CD4-positive, alpha-beta T cell (primary cell): ENCODE measurements at regions of chr13 and their contacts with region 1.

Region 1: DNA sequence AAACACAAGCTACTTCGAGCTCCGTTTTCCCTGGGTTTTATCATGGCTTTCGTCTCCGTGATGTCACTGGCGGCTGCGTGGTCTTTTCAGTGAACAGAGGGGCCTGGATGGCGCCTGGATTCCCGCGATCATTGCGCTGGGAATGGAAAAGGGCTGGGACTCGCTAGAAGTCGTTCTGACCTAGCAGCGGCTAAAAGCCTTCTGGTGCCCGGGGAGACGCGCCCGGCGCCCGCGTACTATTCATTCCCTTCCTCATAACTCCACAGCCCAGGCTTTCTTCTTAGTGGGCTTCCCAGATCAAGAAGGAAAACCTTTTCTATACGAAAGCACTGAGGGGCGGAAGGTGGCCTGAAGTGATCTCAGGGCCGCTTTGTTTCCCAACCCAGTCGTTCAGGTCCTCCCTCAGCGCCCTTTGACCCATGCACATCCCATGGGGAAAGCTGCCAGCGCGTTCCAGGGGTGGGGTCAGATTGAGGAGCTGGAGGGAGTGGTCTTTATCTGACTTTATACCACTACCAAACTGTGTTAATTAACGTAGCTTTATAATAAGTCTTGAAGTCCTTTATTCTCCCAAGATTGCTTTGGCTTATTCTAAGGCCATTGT is 96.6 kb downstream of the ELF1 start:
- DNase-seq: peak in 2 of 14 experiments; percentile 9 to 37
- ATAC-seq: no peak
- H3K4me3 ChIP-seq: no peak overlapping the region
- H3K4me3 Mint-ChIP-seq: peak overlapping the region; percentile 80
- H3K27ac ChIP-seq: no peak overlapping the region
- H3K27ac Mint-ChIP-seq: peak overlapping the region; percentile 42
- H3K4me1 ChIP-seq: peaks cover 15% of the 10 kb centered on the region
- H3K4me1 Mint-ChIP-seq: peaks cover 25% of the 10 kb centered on the region
- H3K27me3 ChIP-seq: no peaks in the 10 kb centered on the region
- H3K27me3 Mint-ChIP-seq: no peaks in the 10 kb centered on the region
- CTCF ChIP-seq: no peak

Region 2: GRCh38 chr13:40777166-40777808 is 145.3 kb before region 1 on chr13:
- CTCF ChIA-PET with region 1: interaction called, 4 read pairs
- POLR2A ChIA-PET with region 1: interaction called, 6 read pairs
- intact Hi-C with region 1: loop called (anchors 2 to 5 kb)
- DNase-seq: peak in 7 of 14 experiments; percentile 15 to 76 (median 45)
- ATAC-seq: peak; percentile 50
- H3K4me3 ChIP-seq: peak overlapping the region; percentile 24
- H3K4me3 Mint-ChIP-seq: peak overlapping the region; percentile 83
- H3K27ac ChIP-seq: peak overlapping the region; percentile 71 to 73
- H3K27ac Mint-ChIP-seq: peak overlapping the region; percentile 91
- H3K4me1 ChIP-seq: peaks cover 30% of the 10 kb centered on the region
- H3K4me1 Mint-ChIP-seq: peaks cover 33% of the 10 kb centered on the region
- H3K27me3 ChIP-seq: no peaks in the 10 kb centered on the region
- H3K27me3 Mint-ChIP-seq: no peaks in the 10 kb centered on the region
- CTCF ChIP-seq: peak; percentile 84

Region 3: GRCh38 chr13:40933508-40934204 is 11.1 kb after region 1 on chr13:
- CTCF ChIA-PET with region 1: no interaction called
- POLR2A ChIA-PET with region 1: interaction called, 13 read pairs
- intact Hi-C with region 1: no loop called
- DNase-seq: peak in 1 of 14 experiments; percentile 17
- ATAC-seq: no peak
- H3K4me3 ChIP-seq: no peak overlapping the region
- H3K4me3 Mint-ChIP-seq: peak overlapping the region; percentile 42
- H3K27ac ChIP-seq: no peak overlapping the region
- H3K27ac Mint-ChIP-seq: peak overlapping the region; percentile 57
- H3K4me1 ChIP-seq: peaks cover 6% of the 10 kb centered on the region
- H3K4me1 Mint-ChIP-seq: peaks cover 44% of the 10 kb centered on the region
- H3K27me3 ChIP-seq: no peaks in the 10 kb centered on the region
- H3K27me3 Mint-ChIP-seq: no peaks in the 10 kb centered on the region
- CTCF ChIP-seq: no peak